HepG2 (cell line): ENCODE measurements at regions of chr20 and their contacts with region 1.

Region 1: GRCh38 chr20:2508631-2509467 is at the start of gene ZNF343:
- DNase-seq: peak; percentile 95
- ATAC-seq: peak; percentile 98
- H3K4me3 ChIP-seq: peak within 1 kb of the TSS; percentile 88 to 96 (median 91)
- H3K27ac ChIP-seq: peak within 1 kb of the TSS; percentile 79
- H3K4me1 ChIP-seq: peaks cover 23% of the 10 kb centered on the region
- H3K27me3 ChIP-seq: peaks cover 2 to 5% of the 10 kb centered on the region in 2 experiments; a peak in 3 of 5 replicates
- CTCF ChIP-seq: peak; percentile 44
- EP300 ChIP-seq: no peak; a peak in 1 of 4 replicates
- POLR2A ChIP-seq: peak; percentile 94 to 95
- RAD21 ChIP-seq: peak; percentile 33; the same call in 1 of the 2 replicates
- total RNA-seq, gene ZNF343: 22.1 and 28.8 TPM in 2 replicates

Region 2: DNA sequence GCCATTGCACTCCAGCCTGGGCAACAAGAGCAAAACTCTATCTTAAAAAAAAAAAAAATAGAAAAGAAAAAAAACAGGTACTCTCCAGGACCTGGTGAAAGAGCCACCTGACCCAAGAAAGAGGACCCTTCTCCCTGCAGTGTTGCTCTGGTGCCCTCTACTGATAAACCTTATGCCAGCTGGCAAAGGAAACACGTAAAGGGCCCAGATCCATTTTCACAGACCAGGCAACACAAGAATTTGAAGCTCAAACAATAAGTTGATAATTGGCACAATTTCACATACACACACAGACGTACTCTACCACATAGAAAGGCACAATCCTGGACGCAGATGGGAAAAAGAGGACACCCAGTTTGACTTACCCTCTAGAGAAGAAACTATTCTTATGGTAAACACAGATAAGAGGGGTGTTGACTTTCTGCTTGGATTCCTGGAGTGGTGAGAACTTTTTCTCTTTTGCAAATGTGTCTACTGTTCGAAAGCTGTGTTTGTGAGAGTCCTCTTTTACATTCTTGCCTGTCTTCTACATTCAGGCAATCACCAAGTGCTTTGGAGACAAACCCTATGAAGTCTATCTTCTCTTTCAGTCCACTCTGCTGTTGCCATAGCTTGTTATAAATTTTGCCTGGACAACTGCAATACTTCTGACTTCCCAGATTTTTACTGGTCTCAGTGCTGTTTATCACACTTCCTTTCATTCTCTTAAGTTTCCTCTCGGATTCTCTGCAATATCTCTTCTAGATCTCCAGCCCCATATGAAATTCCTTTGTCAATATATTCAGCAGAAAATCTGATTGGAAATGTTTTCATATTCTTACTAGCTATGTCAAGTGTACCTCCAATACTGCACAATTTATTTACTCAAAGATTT is 31.9 kb before region 1 on chr20:
- CTCF ChIA-PET with region 1: no interaction called
- POLR2A ChIA-PET with region 1: interaction called, 5 read pairs
- in situ Hi-C with region 1: no loop called
- intact Hi-C with region 1: loop called (anchors 1 kb)
- DNase-seq: peak; percentile 60
- ATAC-seq: peak; percentile 76
- H3K4me3 ChIP-seq: no peak overlapping the region
- H3K27ac ChIP-seq: peak overlapping the region; percentile 54
- H3K4me1 ChIP-seq: peaks cover 28% of the 10 kb centered on the region
- H3K27me3 ChIP-seq: no peaks in the 10 kb centered on the region
- CTCF ChIP-seq: peak; percentile 80
- EP300 ChIP-seq: no peak
- POLR2A ChIP-seq: no peak
- RAD21 ChIP-seq: no peak